MCF 10A (cell line): ENCODE measurements at regions of chrX and their contacts with region 1.

Region 1: DNA sequence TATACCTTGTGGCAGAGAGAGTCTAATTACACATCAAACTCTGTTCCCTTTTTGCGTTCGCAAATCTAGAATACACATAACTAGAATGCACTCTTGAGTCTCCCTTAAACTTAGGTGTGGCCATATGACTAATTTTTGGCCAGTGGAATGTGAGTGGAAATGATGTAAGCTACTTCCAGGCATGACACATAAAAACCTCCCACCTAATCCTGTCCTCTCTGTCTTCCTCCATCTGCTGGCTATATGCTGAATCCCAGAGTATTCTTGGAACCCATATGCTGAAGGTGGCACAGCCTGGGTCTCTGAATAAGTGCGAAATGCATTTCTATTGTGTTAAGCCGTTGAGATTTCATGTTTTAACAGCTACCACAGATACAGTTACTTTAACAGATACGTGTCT is 269.9 kb upstream of the NRK start:
- DNase-seq: peak; percentile 84
- H3K4me3 Mint-ChIP-seq: peak overlapping the region; percentile 8
- H3K27ac Mint-ChIP-seq: peak overlapping the region; percentile 63
- H3K4me1 Mint-ChIP-seq: peaks cover 8% of the 10 kb centered on the region
- H3K27me3 Mint-ChIP-seq: peaks cover 35% of the 10 kb centered on the region
- CTCF ChIP-seq: no peak

Region 2: DNA sequence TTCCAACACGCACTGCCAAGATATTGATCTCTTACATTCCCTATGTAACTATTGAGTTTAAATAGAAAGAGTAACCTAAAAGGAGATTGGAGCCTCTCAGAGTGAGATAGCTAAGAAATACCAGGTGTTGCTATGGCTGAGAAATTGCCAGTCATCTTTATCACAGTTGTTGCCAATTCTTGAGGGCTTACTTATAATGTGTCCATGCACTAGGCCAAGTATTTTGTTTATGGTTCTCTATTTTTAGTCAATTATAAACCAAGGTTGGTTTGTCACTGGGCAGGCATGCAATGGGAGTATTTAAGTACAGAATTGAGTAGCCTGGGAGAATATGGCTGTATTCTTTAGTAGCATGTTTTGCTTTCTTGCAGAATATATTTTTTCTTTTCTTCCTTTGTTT is 533.5 kb before region 1 on chrX:
- CTCF ChIA-PET with region 1: no interaction called
- POLR2A ChIA-PET with region 1: no interaction called
- intact Hi-C with region 1: no loop called
- DNase-seq: no peak
- H3K4me3 Mint-ChIP-seq: no peak overlapping the region
- H3K27ac Mint-ChIP-seq: peak overlapping the region; percentile 33
- H3K4me1 Mint-ChIP-seq: peaks cover 6% of the 10 kb centered on the region
- H3K27me3 Mint-ChIP-seq: peaks cover 36% of the 10 kb centered on the region
- CTCF ChIP-seq: no peak

Region 3: DNA sequence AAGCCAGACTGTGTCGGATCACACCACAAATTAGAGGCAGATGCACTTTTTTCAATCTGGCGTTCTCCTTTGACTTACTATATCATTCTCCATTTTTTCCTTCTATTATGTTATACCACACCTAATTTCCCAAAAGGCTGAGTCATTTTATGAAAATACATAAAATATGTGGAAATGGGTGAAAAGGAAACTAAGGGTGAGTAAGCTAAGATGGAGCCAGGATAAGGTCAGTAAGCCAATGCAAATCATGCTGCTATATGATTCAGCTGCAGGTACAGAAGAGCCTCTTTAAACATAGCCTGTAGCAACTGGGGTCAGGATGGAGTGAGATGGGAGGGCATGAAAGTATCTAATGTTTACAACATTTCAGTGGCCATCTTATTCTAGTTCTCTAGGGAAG is 237.9 kb before region 1 on chrX:
- CTCF ChIA-PET with region 1: no interaction called
- POLR2A ChIA-PET with region 1: interaction called, 3 read pairs
- intact Hi-C with region 1: loop called (anchors 1 kb)
- DNase-seq: peak; percentile 78
- H3K4me3 Mint-ChIP-seq: peak overlapping the region; percentile 73
- H3K27ac Mint-ChIP-seq: peak overlapping the region; percentile 87
- H3K4me1 Mint-ChIP-seq: peaks cover 9% of the 10 kb centered on the region
- H3K27me3 Mint-ChIP-seq: peaks cover 57% of the 10 kb centered on the region
- CTCF ChIP-seq: no peak

Region 4: DNA sequence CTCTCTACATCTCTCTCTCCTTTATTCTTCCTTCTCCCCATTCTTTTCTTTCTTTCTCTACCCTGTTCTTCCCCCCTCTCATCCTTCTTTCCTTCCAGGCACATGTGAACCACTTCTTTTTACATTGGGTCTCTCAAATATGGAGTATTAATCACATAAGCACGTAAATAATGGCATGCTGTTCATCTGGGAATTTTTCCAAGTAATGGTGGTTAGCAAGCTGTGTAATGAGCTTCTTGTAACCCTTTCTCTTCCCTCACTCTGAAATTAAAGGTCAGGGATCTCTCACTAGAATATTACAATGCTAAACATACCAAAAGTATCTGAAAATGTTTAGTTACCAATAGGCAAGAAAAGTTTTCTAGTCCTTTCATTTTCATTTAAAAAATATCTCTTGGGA is 92.0 kb before region 1 on chrX:
- CTCF ChIA-PET with region 1: no interaction called
- POLR2A ChIA-PET with region 1: interaction called, 3 read pairs
- intact Hi-C with region 1: loop called (anchors 2 kb)
- DNase-seq: peak; percentile 51
- H3K4me3 Mint-ChIP-seq: peak overlapping the region; percentile 2
- H3K27ac Mint-ChIP-seq: peak overlapping the region; percentile 78
- H3K4me1 Mint-ChIP-seq: peaks cover 11% of the 10 kb centered on the region
- H3K27me3 Mint-ChIP-seq: peaks cover 67% of the 10 kb centered on the region
- CTCF ChIP-seq: no peak

Region 5: DNA sequence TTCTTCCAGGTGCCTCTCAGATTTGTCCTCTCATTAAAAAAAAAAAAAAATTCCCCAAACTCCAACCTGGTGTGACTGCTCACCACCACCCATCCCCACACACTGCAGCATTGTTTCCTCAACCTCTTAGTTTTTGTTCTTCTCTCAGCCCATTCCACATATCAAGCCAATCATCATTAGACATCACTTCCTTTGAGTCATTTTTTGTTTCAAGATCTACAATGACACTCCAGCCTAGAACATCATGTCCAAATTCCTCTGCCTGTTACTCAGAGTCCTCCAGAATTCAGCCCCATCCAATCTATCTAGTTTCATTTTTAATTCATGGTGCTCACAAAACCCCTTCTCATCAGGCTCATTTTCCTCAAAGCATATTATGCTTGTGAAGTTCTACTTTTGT is 69.4 kb before region 1 on chrX:
- CTCF ChIA-PET with region 1: interaction called, 3 read pairs
- POLR2A ChIA-PET with region 1: no interaction called
- intact Hi-C with region 1: loop called (anchors 1 kb)
- DNase-seq: peak; percentile 63
- H3K4me3 Mint-ChIP-seq: peak overlapping the region; percentile 13
- H3K27ac Mint-ChIP-seq: peak overlapping the region; percentile 84
- H3K4me1 Mint-ChIP-seq: peaks cover 15% of the 10 kb centered on the region
- H3K27me3 Mint-ChIP-seq: peaks cover 31% of the 10 kb centered on the region
- CTCF ChIP-seq: no peak

Region 6: DNA sequence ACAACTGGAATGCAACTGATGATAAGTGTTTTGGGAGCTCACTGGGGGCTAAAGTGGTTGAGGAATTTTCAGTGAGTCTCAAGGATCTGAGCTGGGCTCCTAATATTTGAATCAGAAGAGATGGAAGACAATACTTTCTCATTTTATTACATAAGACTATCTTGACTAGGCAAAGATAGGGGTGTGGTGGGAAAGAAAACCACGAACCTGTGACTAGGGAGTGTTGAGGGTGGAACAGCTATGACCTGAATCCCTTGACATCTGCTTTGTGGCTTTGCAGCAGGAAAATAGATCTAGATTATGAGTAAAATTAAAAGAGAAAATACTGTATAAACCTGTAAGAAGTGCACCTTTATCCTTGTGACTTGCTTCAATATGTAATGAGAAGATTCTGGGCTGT is 36.8 kb before region 1 on chrX:
- CTCF ChIA-PET with region 1: interaction called, 3 read pairs
- POLR2A ChIA-PET with region 1: no interaction called
- intact Hi-C with region 1: loop called (anchors 1 kb)
- DNase-seq: peak; percentile 2
- H3K4me3 Mint-ChIP-seq: no peak overlapping the region
- H3K27ac Mint-ChIP-seq: no peak overlapping the region
- H3K4me1 Mint-ChIP-seq: no peaks in the 10 kb centered on the region
- H3K27me3 Mint-ChIP-seq: peaks cover 49% of the 10 kb centered on the region
- CTCF ChIP-seq: no peak

Region 7: DNA sequence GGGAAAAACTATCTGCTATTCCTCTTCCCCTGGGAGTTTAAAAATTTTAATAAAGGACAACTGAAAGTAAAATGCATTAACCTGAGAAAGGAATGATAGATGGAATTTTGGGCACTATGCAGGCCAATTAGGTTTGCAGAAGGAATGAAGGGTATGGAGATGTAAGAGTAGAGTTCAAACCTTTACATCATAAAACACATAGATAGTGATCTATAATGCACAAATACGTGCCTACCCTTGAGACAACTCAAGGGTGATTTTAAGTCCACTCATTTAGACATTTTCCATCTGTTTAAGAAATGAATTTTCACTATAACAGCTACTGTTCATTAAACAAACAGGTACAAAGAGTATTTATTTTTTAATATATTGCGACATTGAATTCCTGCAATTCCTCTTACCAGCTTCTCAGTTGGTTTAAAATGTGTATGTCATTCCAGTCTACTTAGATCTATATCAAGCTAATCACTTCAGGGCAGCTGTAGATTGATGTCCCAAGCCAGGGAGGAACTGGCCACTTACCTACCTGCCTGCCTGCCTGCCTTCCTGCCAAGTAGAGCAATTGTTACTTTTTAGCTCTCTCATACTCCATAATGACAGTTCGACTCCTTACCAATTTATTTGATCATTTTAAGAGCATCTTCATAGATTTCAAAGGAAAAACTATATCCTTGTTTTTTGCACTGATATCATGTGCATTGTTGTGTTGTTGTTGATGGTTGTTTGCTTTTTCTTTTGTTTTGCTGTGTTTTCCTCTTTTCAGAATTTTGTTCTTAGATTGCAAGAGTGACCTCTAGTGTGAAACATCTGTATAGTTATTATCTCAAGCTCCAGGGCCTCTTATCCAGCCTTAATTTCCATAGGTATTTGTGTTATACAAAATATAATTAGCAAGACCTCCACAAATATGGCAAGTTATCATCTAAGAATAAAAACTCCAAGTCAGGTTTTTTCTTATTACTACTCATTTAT is 149.0 kb after region 1 on chrX:
- CTCF ChIA-PET with region 1: no interaction called
- POLR2A ChIA-PET with region 1: no interaction called
- intact Hi-C with region 1: loop called (anchors 10 kb)
- DNase-seq: peak; percentile 14
- H3K4me3 Mint-ChIP-seq: peak overlapping the region; percentile 11
- H3K27ac Mint-ChIP-seq: peak overlapping the region; percentile 53
- H3K4me1 Mint-ChIP-seq: peaks cover 14% of the 10 kb centered on the region
- H3K27me3 Mint-ChIP-seq: peaks cover 73% of the 10 kb centered on the region
- CTCF ChIP-seq: peak; percentile 30